MCF 10A (cell line): ENCODE measurements at regions of chr11 and their contacts with region 1.

Region 1: GRCh38 chr11:96464700-96465307 is 75.0 kb downstream of the JRKL start:
- DNase-seq: peak; percentile 67
- H3K4me3 Mint-ChIP-seq: no peak overlapping the region
- H3K27ac Mint-ChIP-seq: no peak overlapping the region
- H3K4me1 Mint-ChIP-seq: no peaks in the 10 kb centered on the region
- H3K27me3 Mint-ChIP-seq: peaks cover 44% of the 10 kb centered on the region
- CTCF ChIP-seq: peak; percentile 78

Region 2: GRCh38 chr11:96447208-96448110 is 17.3 kb before region 1 on chr11:
- CTCF ChIA-PET with region 1: interaction called, 14 read pairs
- POLR2A ChIA-PET with region 1: no interaction called
- intact Hi-C with region 1: no loop called
- DNase-seq: no peak
- H3K4me3 Mint-ChIP-seq: no peak overlapping the region
- H3K27ac Mint-ChIP-seq: no peak overlapping the region
- H3K4me1 Mint-ChIP-seq: no peaks in the 10 kb centered on the region
- H3K27me3 Mint-ChIP-seq: peaks cover 57% of the 10 kb centered on the region
- CTCF ChIP-seq: no peak

Region 3: DNA sequence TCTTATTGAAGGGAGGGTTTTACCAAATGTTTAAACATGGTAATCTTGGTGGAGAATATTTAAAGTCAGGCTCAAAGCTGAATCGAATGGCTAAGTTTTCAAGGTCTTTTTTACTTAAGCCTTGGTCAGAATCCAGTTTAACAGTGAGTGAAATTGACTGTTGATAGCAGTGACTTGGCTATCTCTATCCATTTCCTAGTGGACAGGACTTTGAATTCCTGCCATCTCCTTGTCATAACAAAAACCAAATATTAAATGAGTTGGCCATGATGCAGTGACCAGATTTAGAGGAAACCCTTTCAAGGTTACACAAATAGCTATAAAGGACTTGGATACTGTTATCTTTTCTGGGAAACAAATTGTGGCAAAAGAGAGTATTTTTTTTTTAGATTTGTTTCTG is 17.0 kb after region 1 on chr11:
- CTCF ChIA-PET with region 1: interaction called, 19 read pairs
- POLR2A ChIA-PET with region 1: no interaction called
- intact Hi-C with region 1: no loop called
- DNase-seq: no peak
- H3K4me3 Mint-ChIP-seq: no peak overlapping the region
- H3K27ac Mint-ChIP-seq: no peak overlapping the region
- H3K4me1 Mint-ChIP-seq: no peaks in the 10 kb centered on the region
- H3K27me3 Mint-ChIP-seq: peaks cover 28% of the 10 kb centered on the region
- CTCF ChIP-seq: no peak

Region 4: DNA sequence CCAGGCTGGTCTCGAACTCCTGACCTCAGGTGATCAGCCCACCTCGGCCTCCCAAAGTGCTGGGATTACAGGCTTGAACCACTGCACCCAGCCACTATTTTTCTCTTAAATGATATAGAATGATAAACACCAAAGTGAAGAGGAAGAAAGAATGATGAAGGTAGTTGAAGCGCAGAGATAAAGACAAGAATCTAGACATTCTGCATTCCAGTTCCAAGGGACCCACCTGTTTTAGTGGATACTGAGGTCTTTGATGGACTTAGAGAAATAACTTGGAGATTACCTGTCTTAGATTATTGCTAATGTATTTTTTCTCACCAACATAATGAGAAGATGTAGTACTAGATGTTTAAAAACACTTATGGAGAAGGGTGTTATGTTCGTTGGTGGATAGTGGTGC is 139.6 kb after region 1 on chr11:
- CTCF ChIA-PET with region 1: no interaction called
- POLR2A ChIA-PET with region 1: no interaction called
- intact Hi-C with region 1: no loop called
- DNase-seq: no peak
- H3K4me3 Mint-ChIP-seq: no peak overlapping the region
- H3K27ac Mint-ChIP-seq: no peak overlapping the region
- H3K4me1 Mint-ChIP-seq: peaks cover 7% of the 10 kb centered on the region
- H3K27me3 Mint-ChIP-seq: peaks cover 54% of the 10 kb centered on the region
- CTCF ChIP-seq: no peak

Region 5: DNA sequence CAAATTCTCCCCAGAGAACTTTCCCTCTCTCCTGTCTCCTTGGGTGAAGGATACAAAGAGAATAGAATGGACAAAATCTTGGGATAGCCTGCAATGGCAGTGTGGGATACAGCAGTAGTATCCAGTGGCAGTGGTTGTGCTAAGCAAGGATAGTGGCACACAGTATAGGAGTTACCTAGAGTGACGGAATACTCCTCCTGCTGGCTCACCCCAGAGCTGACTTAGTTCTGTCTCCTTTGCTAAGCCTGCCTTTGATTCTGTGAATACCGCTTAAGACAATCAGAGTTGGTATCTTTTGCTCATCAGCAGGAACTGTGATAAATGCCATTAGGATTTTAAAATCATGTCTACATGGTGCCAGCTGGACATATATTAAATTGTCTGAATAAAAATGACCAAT is 329.3 kb after region 1 on chr11:
- CTCF ChIA-PET with region 1: no interaction called
- POLR2A ChIA-PET with region 1: no interaction called
- intact Hi-C with region 1: loop called (anchors 1 kb)
- DNase-seq: peak; percentile 5
- H3K4me3 Mint-ChIP-seq: no peak overlapping the region
- H3K27ac Mint-ChIP-seq: no peak overlapping the region
- H3K4me1 Mint-ChIP-seq: no peaks in the 10 kb centered on the region
- H3K27me3 Mint-ChIP-seq: no peaks in the 10 kb centered on the region
- CTCF ChIP-seq: no peak

Region 6: DNA sequence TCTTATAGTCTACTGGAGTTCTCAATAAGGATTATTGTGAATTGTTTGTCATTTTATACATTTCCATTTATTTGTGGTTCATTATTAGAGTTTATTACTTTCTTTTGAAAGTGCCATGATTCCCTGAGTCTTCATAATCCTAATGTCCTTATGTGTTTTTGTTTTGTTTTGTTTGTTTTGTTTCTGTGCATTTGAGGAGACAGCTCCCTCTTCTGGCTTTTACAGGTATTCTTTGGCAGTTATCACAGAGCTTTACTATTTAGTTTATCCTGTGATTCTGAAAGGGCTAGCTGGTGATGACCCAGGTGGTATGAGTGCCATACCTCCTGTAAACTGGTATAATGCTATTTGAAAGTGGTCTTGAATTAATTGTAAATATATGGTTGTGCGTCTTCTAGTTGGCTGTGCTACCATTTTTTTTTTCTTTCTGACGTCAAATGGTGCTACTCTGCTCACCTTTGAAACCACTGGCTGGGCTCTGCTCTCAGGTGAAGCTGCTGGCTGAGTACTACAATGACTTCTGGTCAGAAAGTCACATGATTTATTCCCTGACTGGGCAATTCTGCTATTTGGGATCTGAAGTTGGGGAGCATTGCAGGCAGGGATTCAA is 676.2 kb after region 1 on chr11:
- CTCF ChIA-PET with region 1: interaction called, 44 read pairs
- POLR2A ChIA-PET with region 1: interaction called, 6 read pairs
- intact Hi-C with region 1: loop called (anchors 1 kb)
- DNase-seq: peak; percentile 46
- H3K4me3 Mint-ChIP-seq: no peak overlapping the region
- H3K27ac Mint-ChIP-seq: no peak overlapping the region
- H3K4me1 Mint-ChIP-seq: no peaks in the 10 kb centered on the region
- H3K27me3 Mint-ChIP-seq: peaks cover 57% of the 10 kb centered on the region
- CTCF ChIP-seq: peak; percentile 56

Region 7: DNA sequence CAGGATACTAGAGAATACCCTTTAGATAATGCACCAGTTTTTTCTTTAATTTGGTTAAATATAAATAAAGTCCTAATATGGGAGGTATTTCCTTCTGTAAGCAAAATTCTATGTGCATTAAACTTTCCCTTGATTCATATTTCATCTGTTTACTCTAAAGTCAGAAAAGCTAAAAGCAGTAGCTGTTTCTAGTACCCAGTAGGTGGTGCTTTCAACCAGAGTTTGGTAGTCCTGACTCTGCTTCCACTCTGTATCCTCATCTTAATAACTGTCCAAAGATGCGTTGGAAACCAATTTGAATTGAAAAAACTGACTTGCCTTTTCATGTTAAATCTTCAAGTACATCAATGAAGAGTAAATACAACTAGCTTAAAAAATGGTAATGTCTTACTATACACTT is 990.2 kb after region 1 on chr11:
- CTCF ChIA-PET with region 1: interaction called, 7 read pairs
- POLR2A ChIA-PET with region 1: no interaction called
- intact Hi-C with region 1: loop called (anchors 10 kb)
- DNase-seq: peak; percentile 18
- H3K4me3 Mint-ChIP-seq: no peak overlapping the region
- H3K27ac Mint-ChIP-seq: no peak overlapping the region
- H3K4me1 Mint-ChIP-seq: no peaks in the 10 kb centered on the region
- H3K27me3 Mint-ChIP-seq: peaks cover 49% of the 10 kb centered on the region
- CTCF ChIP-seq: peak; percentile 18

Region 8: GRCh38 chr11:97656356-97656755 is 1191.6 kb after region 1 on chr11:
- CTCF ChIA-PET with region 1: no interaction called
- POLR2A ChIA-PET with region 1: no interaction called
- intact Hi-C with region 1: no loop called
- DNase-seq: no peak
- H3K4me3 Mint-ChIP-seq: no peak overlapping the region
- H3K27ac Mint-ChIP-seq: no peak overlapping the region
- H3K4me1 Mint-ChIP-seq: no peaks in the 10 kb centered on the region
- H3K27me3 Mint-ChIP-seq: no peaks in the 10 kb centered on the region
- CTCF ChIP-seq: no peak